HEK293 (cell line): ENCODE measurements at regions of chr21 and their contacts with region 1.

Region 1: DNA sequence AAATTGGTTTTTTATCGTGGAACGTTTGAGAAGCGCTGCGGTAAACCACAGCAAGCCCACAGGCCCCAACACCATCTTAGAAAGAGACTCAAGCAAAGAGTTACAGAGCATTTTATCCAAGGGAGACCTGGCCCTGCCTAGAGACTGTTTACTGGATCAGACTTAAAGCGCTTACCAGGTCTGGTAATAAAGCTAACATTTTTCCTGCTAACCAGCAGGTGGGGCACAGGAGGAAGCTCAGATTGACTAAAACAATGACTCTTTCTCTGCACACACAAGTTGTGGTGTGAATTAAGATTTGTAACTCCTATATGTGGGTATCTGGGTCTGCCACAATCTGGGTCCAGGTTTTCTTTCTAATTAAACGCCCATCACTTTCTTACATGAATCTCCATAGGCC is 136.6 kb upstream of the ETS2 start:
- H3K4me3 ChIP-seq: no peak overlapping the region
- H3K27ac ChIP-seq: no peak overlapping the region
- H3K4me1 ChIP-seq: no peaks in the 10 kb centered on the region
- CTCF ChIP-seq: peak; percentile 45

Region 2: DNA sequence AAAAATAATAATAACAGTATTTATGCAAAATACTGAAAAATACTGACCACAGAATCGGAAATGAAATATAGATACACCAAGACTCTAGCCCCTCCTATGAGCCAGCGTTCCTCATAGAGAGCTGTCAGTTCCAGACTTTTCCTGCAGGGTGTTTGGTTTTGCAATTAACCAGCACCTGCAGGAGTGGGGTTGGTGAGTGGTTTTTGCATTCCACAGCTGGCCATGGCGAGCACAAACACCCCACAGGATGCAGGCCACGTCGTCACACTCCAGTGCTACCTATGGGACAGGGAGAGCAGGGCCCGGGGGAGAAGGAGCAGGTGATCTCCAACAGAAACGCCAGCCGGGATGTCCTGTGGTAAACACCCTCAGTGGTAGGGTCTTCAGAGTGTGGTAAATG is 265.0 kb before region 1 on chr21:
- CTCF ChIA-PET with region 1: no interaction called
- POLR2A ChIA-PET with region 1: no interaction called
- H3K4me3 ChIP-seq: no peak overlapping the region
- H3K27ac ChIP-seq: no peak overlapping the region
- H3K4me1 ChIP-seq: no peaks in the 10 kb centered on the region
- CTCF ChIP-seq: no peak

Region 3: GRCh38 chr21:38679531-38679930 is 10.4 kb after region 1 on chr21:
- CTCF ChIA-PET with region 1: interaction called, 12 read pairs
- POLR2A ChIA-PET with region 1: no interaction called
- H3K4me3 ChIP-seq: no peak overlapping the region
- H3K27ac ChIP-seq: no peak overlapping the region
- H3K4me1 ChIP-seq: no peaks in the 10 kb centered on the region
- CTCF ChIP-seq: no peak

Region 4: GRCh38 chr21:38958940-38959691 is 289.9 kb after region 1 on chr21:
- CTCF ChIA-PET with region 1: no interaction called
- POLR2A ChIA-PET with region 1: no interaction called
- H3K4me3 ChIP-seq: no peak overlapping the region
- H3K27ac ChIP-seq: no peak overlapping the region
- H3K4me1 ChIP-seq: peaks cover 13% of the 10 kb centered on the region
- CTCF ChIP-seq: no peak